ENCODE measurements at regions of chr6 and their contacts with region 1.

Region 1: GRCh38 chr6:110179401-110180227 is at the start of gene WASF1:
- DNase-seq: peak; percentile 96
- ATAC-seq: peak; percentile 99
- H3K4me3 ChIP-seq: peak within 1 kb of the TSS; percentile 87 to 98
- H3K27ac ChIP-seq: peak within 1 kb of the TSS in 1 of 2 donors; percentile 79
- H3K4me1 ChIP-seq: peaks cover 1 to 2% of the 10 kb centered on the region in 2 donors
- H3K27me3 ChIP-seq: no peaks in the 10 kb centered on the region
- total RNA-seq, gene WASF1: 8.9 to 10.3 TPM

Region 2: DNA sequence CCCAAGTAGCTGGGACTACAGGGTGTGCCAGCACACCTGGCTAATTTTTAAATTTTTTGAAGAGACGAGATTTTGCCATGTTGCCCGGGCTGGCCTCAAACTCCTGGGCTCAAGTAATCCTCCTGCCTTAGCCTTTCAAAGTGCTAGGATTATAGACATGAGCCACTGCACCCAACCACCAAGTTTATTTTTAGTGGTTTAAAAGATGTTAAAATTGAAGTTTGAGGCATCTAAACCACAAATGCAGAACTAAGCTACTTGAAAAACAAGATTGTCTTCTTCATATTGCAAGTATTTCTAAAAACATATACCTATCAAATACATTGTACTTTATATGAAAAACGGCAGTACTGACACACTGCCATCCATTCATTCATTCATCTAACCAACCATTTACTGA is 31.7 kb before region 1 on chr6:
- intact Hi-C with region 1: no loop called
- DNase-seq: no peak
- ATAC-seq: no peak
- H3K4me3 ChIP-seq: no peak overlapping the region
- H3K27ac ChIP-seq: no peak overlapping the region
- H3K4me1 ChIP-seq: no peaks in the 10 kb centered on the region
- H3K27me3 ChIP-seq: no peaks in the 10 kb centered on the region

Region 3: DNA sequence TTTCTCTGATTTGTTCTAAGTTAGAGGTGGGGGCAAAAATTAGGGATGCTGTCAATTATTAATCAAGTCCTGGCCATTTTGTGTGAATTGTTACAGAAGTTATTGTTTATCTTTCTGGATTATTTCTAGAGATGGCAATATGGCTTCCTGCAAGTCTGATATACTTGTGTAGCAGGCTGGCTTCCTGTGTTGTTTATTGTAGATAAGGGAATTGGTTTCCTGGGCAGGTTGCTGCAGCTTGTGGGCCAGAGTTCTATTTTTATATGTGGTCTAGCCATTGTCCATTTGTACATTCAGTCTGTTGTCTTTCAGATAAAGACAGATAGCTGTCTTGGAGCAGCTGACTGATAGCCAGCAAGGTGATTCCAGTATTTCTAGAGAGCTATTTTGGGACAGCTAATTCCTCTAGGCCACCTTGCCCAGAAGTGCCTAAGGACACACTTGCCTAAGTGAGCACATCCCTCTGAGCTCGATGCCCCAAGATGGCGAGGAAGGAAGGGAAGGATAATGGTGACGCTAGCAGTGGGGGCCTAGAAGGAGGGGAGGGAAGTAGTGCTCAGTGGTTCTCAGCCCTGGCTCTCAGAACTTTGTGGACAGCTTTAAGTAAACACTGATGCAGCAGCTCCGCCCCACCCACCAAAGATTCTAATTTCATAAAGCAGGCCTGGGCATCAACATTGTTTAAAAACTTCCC is 210.2 kb after region 1 on chr6:
- intact Hi-C with region 1: loop called (anchors 1 to 5 kb)
- DNase-seq: no peak
- ATAC-seq: no peak
- H3K4me3 ChIP-seq: no peak overlapping the region
- H3K27ac ChIP-seq: no peak overlapping the region
- H3K4me1 ChIP-seq: no peaks in the 10 kb centered on the region
- H3K27me3 ChIP-seq: no peaks in the 10 kb centered on the region

Measured in aorta (tissue), 5 donors.